Activated T-helper 1 cell treated with anti-CD3 and anti-CD28 coated beads, Interleukin-12 subunit alpha, Interleukin-12 subunit beta, Interleukin-2, Interleukin-4 antibody, amounts not matched to agents 30 ng/mL and 10 ng/mL and 1 ng/mL, durations not matched to agents 14 hours and 24 hours and 36 hours (primary cell): ENCODE measurements at regions of chr12 and their contacts with region 1.

Region 1: DNA sequence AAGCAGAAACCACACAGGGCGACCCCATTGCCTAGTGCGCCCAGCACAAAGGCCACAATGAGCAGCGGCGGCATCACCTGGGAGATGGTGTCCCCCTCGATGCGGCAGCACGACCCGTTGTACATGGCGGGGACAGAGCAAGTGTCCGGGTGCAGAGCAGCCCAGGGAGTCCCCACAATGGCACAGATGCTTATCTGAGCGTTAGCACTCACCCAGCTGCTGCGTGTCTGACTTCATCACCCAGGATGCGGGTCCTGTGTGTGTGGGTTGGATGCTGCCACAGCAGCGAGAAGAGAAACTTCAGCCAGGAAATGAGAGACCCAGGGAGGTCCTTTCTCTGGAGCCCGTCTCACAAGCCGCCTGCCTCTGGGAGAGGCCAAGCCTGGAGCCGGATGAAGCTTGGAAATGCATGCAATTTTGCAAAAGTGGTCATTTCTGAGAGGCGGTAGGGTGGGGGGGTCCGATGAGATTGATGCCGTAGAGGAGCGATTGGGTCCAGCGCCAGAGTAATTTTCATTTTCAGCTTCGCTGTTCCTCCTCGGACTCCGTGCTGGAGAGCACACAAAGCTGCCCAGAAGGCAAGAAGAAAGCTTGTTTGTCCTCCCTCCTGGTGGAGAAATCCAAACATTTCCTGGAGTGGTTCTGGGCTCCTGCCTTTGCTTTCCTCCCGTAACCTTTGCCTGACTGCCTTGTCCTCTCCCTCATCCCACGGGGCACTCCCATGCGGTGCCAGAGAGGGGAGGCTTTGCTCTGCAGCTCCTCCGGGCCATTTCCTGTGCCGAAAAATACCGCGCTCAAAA is at the start of gene HCAR1:
- DNase-seq: peak; percentile 74
- H3K4me3 Mint-ChIP-seq: peak within 1 kb of the TSS; percentile 91
- H3K27ac Mint-ChIP-seq: peak within 1 kb of the TSS; percentile 90
- H3K4me1 Mint-ChIP-seq: peaks cover 79% of the 10 kb centered on the region
- H3K27me3 Mint-ChIP-seq: no peaks in the 10 kb centered on the region
- total RNA-seq, gene HCAR1: 7.6 and 8.6 TPM in 2 replicates

Region 2: DNA sequence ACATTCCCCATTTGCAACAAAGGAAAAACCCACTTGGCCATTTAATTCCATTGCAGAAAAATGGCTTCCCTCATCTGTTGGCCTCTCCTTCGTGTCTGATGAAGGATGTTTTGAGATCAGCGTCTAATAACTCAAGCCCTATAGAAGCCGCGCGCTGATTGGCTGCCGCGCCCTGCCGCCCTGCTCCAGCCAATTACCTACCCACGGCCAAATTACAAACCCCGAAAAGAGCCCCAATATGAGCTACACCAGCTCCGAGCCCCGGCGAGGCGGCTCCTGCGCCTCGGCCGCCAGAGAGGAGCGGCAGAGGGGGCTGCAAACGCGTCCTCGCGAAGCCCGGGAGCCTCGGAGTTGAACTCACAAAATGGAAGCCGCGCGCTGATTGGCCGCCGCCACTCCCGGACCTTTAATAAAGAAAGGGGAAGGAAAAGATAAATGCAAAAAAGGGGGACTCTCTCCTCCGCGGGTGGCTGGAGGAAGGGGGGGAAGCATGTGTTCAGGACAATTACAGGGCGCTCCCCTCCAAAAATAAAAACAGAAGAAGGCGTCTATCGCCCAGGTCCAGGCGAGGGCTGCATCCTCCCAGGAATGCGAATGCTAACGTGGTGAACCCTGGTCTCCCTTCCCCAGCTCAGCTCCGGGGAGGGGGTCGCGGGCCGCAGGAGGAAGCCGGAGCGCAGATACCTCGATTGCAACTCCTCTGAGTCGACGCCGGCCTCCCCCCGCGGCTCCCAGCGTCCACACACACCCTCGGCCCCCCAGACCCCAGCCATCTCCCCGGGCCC is 927.4 kb before region 1 on chr12:
- intact Hi-C with region 1: loop called (anchors 5 kb)
- DNase-seq: peak; percentile 83
- H3K4me3 Mint-ChIP-seq: peak overlapping the region; percentile 87
- H3K27ac Mint-ChIP-seq: peak overlapping the region; percentile 97
- H3K4me1 Mint-ChIP-seq: peaks cover 40% of the 10 kb centered on the region
- H3K27me3 Mint-ChIP-seq: peaks cover 2% of the 10 kb centered on the region

Region 3: DNA sequence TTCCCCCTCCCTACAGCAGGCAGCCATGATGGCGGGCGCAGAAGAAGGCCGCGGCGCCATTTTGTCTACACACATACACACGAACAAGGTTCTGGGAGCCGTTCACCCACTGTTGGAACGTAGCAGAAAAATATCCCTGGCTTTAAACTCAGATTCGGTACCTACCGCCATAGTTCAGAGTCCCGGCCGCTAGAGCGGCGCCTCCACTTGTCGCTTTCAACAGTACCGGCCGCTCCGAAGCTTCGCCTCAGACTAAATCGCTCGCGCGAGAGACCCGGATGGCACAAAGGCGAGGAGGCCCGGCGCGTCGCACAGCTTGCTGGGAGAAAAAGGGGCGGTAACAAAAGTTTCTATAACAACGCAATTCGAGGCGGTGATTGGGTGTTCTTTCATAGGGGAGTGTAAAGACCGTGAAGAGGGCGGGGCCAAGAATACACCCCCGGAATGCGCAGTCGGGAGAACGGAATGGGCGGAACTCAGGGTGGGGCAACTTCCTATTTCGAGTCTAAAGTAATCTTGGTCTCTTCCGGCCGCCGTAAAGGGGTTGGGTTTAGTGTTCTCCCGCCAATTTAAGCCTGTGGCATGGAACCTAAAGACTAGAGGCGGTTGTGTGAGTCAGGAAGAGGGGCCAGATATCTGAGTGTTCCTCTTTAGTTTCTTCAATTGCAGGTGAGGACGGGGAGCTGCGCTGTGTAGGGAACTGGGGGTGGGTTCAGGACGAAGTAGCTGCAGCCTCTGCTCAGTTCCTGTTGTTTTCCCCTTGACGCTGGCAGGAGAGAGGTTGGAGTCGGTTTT is 203.5 kb before region 1 on chr12 and contains the starts of genes KNTC1 and RSRC2:
- intact Hi-C with region 1: loop called (anchors 5 kb)
- DNase-seq: peak; percentile 99
- H3K4me3 Mint-ChIP-seq: no peak within 1 kb of the TSS
- H3K27ac Mint-ChIP-seq: no peak within 1 kb of the TSS
- H3K4me1 Mint-ChIP-seq: peaks cover 43% of the 10 kb centered on the region
- H3K27me3 Mint-ChIP-seq: no peaks in the 10 kb centered on the region
- total RNA-seq, gene KNTC1: 122 and 126 TPM in 2 replicates
- total RNA-seq, gene RSRC2: 101 and 103 TPM in 2 replicates

Region 4: GRCh38 chr12:122646517-122647217 is 83.7 kb before region 1 on chr12:
- intact Hi-C with region 1: loop called (anchors 1 kb)
- DNase-seq: peak; percentile 31
- H3K4me3 Mint-ChIP-seq: peak overlapping the region; percentile 34
- H3K27ac Mint-ChIP-seq: peak overlapping the region; percentile 84
- H3K4me1 Mint-ChIP-seq: peaks cover 20% of the 10 kb centered on the region
- H3K27me3 Mint-ChIP-seq: no peaks in the 10 kb centered on the region

Region 5: GRCh38 chr12:122752464-122753318 is 22.3 kb after region 1 on chr12 and contains the start of gene DENR:
- intact Hi-C with region 1: loop called (anchors 1 kb)
- DNase-seq: peak; percentile 100
- H3K4me3 Mint-ChIP-seq: peak within 1 kb of the TSS; percentile 91
- H3K27ac Mint-ChIP-seq: peak within 1 kb of the TSS; percentile 92
- H3K4me1 Mint-ChIP-seq: peaks cover 54% of the 10 kb centered on the region
- H3K27me3 Mint-ChIP-seq: no peaks in the 10 kb centered on the region
- total RNA-seq, gene DENR: 87.6 and 88.7 TPM in 2 replicates

Region 6: GRCh38 chr12:122871851-122872780 is 141.7 kb after region 1 on chr12:
- intact Hi-C with region 1: loop called (anchors 5 kb)
- DNase-seq: no peak
- H3K4me3 Mint-ChIP-seq: peak overlapping the region; percentile 67
- H3K27ac Mint-ChIP-seq: peak overlapping the region; percentile 74
- H3K4me1 Mint-ChIP-seq: peaks cover 68% of the 10 kb centered on the region
- H3K27me3 Mint-ChIP-seq: peaks cover 8% of the 10 kb centered on the region

Region 7: DNA sequence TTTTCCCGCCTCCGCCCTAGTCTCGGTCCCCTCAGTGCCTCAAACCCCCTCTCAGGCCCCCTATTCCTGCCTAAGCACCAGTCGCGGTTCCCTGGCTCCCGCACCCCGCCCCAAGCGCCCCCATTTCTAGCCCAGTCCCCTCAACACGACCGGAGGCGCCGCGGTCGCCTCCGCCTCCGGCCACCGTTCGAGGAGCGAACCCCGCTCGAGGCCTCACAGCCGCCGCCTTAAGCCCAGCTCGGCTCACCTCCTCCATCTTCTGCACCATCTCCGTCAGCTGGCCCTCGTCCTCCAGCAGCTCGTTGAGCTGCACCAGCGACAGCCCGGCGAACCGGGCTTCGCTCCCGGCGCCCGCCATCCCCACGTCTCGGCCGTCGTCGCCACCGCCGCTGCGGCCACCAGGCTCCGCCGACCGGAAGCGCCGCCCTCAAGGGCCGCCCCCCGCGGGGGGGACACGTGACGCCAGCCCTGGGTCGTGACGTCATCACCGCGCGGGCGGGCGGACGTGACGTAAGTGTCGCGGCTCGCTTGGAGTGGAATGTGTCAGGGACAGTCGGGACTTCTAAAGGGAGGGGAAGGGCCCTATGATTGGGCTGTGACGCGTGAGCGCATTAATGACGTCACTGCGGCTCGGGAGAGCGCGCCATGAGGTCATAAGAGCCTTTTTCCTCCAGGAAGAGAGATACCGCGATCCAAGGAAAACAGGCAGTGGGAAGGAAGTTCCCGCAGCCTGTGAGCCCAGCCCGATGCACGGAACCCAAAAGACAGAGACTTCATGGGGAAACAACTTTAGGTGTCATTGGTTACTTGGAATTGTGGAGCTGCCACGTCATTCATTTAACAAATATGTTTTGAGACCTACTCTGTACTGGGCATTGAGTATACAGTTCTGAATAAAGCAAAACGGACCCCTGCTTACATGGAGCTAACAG is 165.6 kb after region 1 on chr12 and contains the start of gene VPS37B:
- intact Hi-C with region 1: loop called (anchors 5 kb)
- DNase-seq: peak; percentile 87
- H3K4me3 Mint-ChIP-seq: peak within 1 kb of the TSS; percentile 91
- H3K27ac Mint-ChIP-seq: peak within 1 kb of the TSS; percentile 91
- H3K4me1 Mint-ChIP-seq: peaks cover 93% of the 10 kb centered on the region
- H3K27me3 Mint-ChIP-seq: peaks cover 5% of the 10 kb centered on the region
- total RNA-seq, gene VPS37B: 12.7 and 14.3 TPM in 2 replicates

Region 8: DNA sequence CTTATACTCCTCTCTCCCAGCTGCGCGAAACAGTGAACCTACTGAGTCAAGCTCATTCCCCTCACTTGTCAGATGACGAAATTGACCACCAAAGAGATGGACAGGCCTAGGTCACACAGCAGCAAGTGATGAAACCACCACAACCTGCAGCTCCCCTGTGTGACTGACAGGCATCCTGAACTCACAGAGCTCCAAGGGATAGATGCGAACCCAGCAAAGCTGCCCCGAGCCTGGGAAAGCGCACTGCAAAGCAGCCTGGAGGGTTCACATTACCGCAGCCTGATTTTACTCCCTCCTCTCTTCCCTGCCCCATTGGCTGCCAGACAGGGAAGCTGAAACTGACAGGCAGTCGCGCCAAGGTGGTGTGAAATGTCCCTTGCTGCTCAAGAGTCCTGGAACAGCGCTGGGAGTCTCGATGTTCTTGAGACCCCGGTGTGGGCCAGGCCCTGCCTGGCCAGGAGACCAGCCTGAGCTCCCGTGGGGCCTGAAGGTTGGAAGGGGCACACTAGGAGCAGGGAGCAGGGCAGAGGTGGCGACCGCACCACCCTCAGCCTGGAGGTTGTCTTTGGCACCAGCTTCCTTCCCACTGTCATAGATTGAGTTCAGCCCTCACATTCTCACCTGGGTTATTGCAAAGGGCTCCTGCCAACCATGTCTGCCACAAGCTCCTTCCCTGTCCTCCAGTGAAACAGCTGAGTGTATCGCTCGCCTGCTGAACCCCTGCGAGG is 763.9 kb after region 1 on chr12:
- intact Hi-C with region 1: no loop called
- DNase-seq: no peak
- H3K4me3 Mint-ChIP-seq: no peak overlapping the region
- H3K27ac Mint-ChIP-seq: no peak overlapping the region
- H3K4me1 Mint-ChIP-seq: no peaks in the 10 kb centered on the region
- H3K27me3 Mint-ChIP-seq: no peaks in the 10 kb centered on the region